Aorta (tissue), 5 donors: ENCODE measurements at regions of chr6 and their contacts with region 1.

Region 1: DNA sequence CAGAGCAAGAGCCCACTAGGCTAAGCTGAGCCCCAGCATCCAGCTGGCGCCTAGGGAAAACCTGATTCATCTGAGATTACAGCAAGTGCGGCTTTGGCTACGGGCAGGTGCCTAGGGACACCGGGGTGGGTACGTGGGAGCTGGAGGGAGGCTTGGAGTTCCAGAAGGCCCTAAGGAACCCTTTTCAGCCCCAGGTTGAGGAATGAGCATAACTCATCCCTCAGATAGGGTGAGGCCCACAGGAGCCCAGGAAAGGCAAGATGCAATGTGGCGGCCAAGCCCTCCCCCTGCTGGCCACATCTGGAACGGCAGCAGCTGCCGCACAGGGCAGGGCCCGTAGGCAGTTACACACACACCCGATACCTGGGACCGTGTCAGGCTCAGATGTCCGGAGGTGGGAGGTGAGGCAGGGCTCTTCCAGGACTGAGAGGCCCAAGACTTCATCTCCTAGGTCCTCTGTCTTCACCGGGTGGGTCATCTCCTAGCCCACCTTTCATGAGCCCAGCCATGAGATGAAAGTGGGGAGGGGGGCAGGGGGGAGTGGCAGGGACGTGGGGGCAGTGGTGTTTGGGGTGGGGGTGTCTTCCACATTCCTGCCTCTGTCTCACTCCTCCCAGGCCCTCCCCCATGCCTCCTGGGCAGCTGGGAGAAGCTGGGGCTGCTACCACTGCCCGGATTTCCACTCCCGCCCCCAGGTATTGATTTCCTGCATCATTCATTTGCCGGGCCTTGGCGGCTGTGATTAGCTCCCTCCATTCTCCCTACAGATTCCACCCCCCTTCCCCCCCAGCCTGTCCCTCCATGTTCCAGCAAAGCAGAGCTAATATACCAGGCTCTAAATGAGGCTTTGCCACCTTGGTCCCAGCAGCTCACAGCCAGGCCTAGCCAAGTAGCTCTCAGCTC is 5.5 kb downstream of the MDGA1 start:
- DNase-seq: peak; percentile 78 to 92
- ATAC-seq: peak; percentile 82
- H3K4me3 ChIP-seq: no peak overlapping the region
- H3K27ac ChIP-seq: no peak overlapping the region
- H3K4me1 ChIP-seq: no peaks in the 10 kb centered on the region
- H3K27me3 ChIP-seq: no peaks in the 10 kb centered on the region

Region 2: DNA sequence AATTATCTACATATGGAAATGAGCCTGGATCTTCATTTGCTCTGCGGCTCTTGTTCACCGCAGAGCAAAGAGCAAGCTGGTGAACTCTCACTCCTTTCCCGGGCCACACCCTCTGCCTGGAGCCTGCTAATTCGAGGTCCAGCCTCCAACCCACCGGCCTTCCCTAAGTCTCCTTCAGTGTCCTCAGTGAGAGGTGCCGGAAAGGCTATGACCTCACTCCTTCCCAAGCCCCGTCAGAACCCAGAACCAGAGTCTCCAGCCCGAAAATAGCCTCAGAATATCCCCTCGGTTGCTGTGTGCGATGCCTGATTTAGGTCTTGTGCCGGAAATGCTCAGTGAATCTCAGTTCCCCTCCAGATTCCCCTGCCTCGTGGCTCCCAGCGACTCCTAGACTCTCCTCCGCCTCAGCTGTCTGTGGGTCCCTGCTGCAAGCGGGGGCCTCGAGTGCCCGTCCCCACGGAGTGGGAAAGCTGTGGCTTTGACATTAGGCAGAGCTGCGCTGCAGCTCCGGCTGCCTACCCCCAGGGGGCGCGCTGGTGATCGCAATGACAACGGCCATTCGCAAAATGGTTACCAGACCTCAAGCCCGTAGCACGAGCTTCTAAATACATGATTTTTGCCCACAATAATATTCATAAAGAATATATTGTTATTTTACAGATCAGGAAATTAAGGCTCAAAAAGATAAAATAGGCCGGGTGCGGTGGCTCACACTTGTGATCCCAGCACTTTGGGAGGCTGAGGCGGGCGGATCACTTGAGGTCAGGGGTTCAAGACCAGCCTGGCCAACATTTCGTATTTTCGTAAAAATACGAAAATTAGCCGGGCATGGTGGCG is 1351.3 kb before region 1 on chr6:
- intact Hi-C with region 1: no loop called
- DNase-seq: peak; percentile 85 to 95
- ATAC-seq: peak; percentile 88
- H3K4me3 ChIP-seq: no peak overlapping the region
- H3K27ac ChIP-seq: no peak overlapping the region
- H3K4me1 ChIP-seq: no peaks in the 10 kb centered on the region
- H3K27me3 ChIP-seq: no peaks in the 10 kb centered on the region

Region 3: DNA sequence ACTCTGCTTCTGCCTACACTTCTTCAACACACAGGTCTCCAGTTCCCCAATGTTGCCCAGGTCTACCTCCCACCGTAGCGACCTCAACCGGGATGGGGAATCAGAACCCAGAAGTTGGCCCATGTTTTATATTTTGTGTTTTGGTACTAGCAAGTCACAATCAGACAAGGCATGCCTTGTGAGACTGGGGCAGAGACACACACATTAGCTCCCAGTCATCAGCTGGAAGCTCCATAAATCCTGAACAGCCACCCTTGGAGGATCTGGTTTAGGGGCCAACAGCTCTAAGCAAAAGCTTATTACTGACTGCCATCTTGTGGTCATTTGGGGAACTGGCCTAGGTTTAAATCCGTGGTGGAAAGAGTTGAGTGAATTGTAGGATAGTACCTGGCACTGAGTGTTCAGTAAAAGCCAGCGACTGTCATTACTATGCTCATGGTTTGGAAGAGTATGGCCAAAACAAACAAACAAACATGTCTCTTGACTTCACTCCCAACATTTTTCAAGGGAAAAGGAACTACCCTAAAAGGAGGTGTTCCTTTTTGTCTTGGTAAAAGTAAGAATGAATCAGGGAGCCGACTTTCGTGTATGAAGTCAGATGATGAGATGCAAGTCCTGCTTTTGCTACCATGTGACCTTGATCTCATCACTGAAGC is 481.7 kb before region 1 on chr6:
- intact Hi-C with region 1: no loop called
- DNase-seq: peak in 1 of 2 donors; percentile 65
- ATAC-seq: peak; percentile 91
- H3K4me3 ChIP-seq: no peak overlapping the region
- H3K27ac ChIP-seq: no peak overlapping the region
- H3K4me1 ChIP-seq: no peaks in the 10 kb centered on the region
- H3K27me3 ChIP-seq: no peaks in the 10 kb centered on the region

Region 4: GRCh38 chr6:37324131-37325033 is 367.8 kb before region 1 on chr6:
- intact Hi-C with region 1: loop called (anchors 10 kb)
- DNase-seq: no peak
- ATAC-seq: no peak
- H3K4me3 ChIP-seq: no peak overlapping the region
- H3K27ac ChIP-seq: peak overlapping the region in 1 of 2 donors; percentile 42
- H3K4me1 ChIP-seq: peaks cover 0 to 2% of the 10 kb centered on the region in 2 donors
- H3K27me3 ChIP-seq: no peaks in the 10 kb centered on the region

Region 5: GRCh38 chr6:37365762-37366161 is 326.4 kb before region 1 on chr6:
- intact Hi-C with region 1: loop called in 1 of 2 experiments (anchors 5 kb)
- DNase-seq: no peak
- ATAC-seq: no peak
- H3K4me3 ChIP-seq: no peak overlapping the region
- H3K27ac ChIP-seq: no peak overlapping the region
- H3K4me1 ChIP-seq: peaks cover 4 to 13% of the 10 kb centered on the region in 2 donors
- H3K27me3 ChIP-seq: no peaks in the 10 kb centered on the region

Region 6: DNA sequence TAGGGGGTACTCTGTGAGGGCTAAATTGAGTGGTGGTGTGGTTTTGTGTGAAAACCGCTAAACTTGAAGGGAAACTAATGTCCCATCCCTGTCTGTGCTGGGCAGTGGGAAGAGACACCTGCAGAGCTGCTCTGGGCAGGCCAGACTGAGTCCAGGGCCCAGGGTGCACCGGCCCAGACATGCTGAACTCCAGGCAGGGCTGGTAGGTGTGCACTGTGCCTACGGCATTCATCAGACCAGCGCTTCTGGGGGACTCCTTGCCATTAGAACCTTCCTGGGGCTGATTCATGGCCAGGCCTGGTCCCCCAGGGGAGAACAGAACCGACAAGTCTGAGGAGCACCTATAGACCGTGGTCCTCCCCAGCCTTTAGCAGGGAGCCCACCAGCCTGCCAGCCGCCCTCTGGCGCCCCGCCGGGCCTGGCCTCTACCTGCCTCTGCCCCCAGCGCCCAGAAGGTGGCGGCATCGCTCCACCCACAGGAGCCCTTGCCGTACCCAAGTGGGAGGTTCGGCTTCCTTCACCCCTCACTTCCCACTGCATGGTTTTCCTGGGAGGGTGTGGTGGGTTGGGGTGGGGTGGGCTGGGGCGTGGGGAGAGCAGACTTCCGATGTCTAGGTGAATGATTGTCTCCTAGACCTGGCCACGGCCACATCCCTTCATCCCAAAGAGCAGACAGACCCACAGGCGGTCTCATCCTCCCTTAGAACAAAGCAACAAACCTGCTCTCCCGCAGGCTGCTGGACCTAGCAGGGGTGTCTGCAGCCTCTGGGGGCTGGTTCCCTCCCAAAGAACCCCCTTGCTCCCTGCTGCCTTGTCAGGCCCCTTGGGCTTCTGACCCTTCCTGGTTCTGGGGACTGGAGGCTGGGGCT is 208.0 kb before region 1 on chr6:
- intact Hi-C with region 1: loop called (anchors 2 kb)
- DNase-seq: peak in 1 of 2 donors; percentile 87
- ATAC-seq: peak; percentile 75
- H3K4me3 ChIP-seq: no peak overlapping the region
- H3K27ac ChIP-seq: no peak overlapping the region
- H3K4me1 ChIP-seq: no peaks in the 10 kb centered on the region
- H3K27me3 ChIP-seq: no peaks in the 10 kb centered on the region

Region 7: GRCh38 chr6:37566111-37566949 is 125.8 kb before region 1 on chr6:
- intact Hi-C with region 1: loop called in 1 of 2 experiments (anchors 5 kb)
- DNase-seq: peak; percentile 62 to 88
- ATAC-seq: peak; percentile 84
- H3K4me3 ChIP-seq: peak overlapping the region; percentile 13 to 19
- H3K27ac ChIP-seq: no peak overlapping the region
- H3K4me1 ChIP-seq: no peaks in the 10 kb centered on the region
- H3K27me3 ChIP-seq: no peaks in the 10 kb centered on the region

Region 8: GRCh38 chr6:37791156-37791919 is 99.2 kb after region 1 on chr6:
- intact Hi-C with region 1: no loop called
- DNase-seq: peak; percentile 95 to 96
- ATAC-seq: peak; percentile 97
- H3K4me3 ChIP-seq: no peak overlapping the region
- H3K27ac ChIP-seq: no peak overlapping the region
- H3K4me1 ChIP-seq: no peaks in the 10 kb centered on the region
- H3K27me3 ChIP-seq: no peaks in the 10 kb centered on the region

Region 9: GRCh38 chr6:38012573-38012972 is 320.4 kb after region 1 on chr6:
- intact Hi-C with region 1: loop called in 1 of 2 experiments (anchors 10 kb)
- DNase-seq: no peak
- ATAC-seq: no peak
- H3K4me3 ChIP-seq: no peak overlapping the region
- H3K27ac ChIP-seq: no peak overlapping the region
- H3K4me1 ChIP-seq: peaks cover 2 to 5% of the 10 kb centered on the region in 2 donors
- H3K27me3 ChIP-seq: no peaks in the 10 kb centered on the region

Region 10: GRCh38 chr6:38493931-38494547 is 801.9 kb after region 1 on chr6:
- intact Hi-C with region 1: loop called (anchors 5 to 10 kb)
- DNase-seq: peak; percentile 67 to 84
- ATAC-seq: no peak
- H3K4me3 ChIP-seq: no peak overlapping the region
- H3K27ac ChIP-seq: no peak overlapping the region
- H3K4me1 ChIP-seq: no peaks in the 10 kb centered on the region
- H3K27me3 ChIP-seq: no peaks in the 10 kb centered on the region